ENCODE measurements at regions of chr9 and their contacts with region 1.

Region 1: GRCh38 chr9:83707768-83708514 is at the start of gene UBQLN1:
- DNase-seq: peak; percentile 89
- H3K4me3 ChIP-seq: peak within 1 kb of the TSS; percentile 68 to 90 (median 78)
- H3K27ac ChIP-seq: peak within 1 kb of the TSS; percentile 97
- H3K4me1 ChIP-seq: peaks cover 5% of the 10 kb centered on the region
- H3K27me3 ChIP-seq: no peaks in the 10 kb centered on the region
- CTCF ChIP-seq: no peak
- total RNA-seq, gene UBQLN1: 117 to 126 TPM

Region 2: DNA sequence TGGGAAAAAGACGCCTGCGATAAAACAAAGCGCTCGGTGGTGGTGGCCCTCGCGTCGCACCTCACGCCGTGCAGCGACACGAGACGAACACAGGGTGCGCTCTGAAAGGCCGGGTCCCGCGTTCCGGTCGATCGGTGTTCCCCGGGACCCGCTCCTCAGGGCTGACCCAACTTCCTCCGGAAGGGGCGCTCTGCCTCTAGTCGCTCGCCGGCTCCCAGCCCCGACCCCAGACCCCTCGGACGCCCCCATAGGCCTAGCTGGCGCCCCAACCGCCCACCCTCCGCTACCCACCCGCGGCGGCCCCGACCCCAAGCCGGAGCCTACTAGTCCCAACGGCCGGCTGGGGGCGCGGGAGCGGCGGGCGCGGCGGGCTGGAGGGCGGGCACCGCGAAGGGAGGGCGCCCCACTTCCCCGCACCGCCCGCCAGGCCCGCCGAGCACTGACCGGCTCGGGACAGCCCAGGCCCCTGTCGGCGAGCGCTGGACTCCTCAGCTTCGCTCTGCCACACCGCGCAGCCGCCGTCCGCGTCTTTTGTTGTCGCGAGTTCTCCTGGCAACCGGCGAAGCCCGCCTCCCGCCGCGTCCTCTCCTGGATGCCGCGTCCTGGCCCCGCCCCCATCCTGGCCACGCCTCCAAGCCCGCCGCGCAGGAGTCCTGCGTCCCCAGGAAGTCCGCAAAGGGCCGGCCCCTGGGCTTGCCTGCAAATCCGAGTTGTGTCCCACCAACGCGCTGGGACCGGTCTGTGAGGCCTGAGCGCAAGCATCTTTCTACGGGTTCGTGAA is 213.2 kb after region 1 on chr9 and contains the start of gene KIF27:
- CTCF ChIA-PET with region 1: no interaction called
- dilution Hi-C with region 1: no loop called
- in situ Hi-C with region 1: no loop called
- intact Hi-C with region 1: loop called (anchors 10 kb)
- DNase-seq: peak; percentile 95
- H3K4me3 ChIP-seq: peak within 1 kb of the TSS; percentile 57 to 70 (median 64)
- H3K27ac ChIP-seq: peak within 1 kb of the TSS; percentile 77
- H3K4me1 ChIP-seq: peaks cover 7% of the 10 kb centered on the region
- H3K27me3 ChIP-seq: no peaks in the 10 kb centered on the region
- CTCF ChIP-seq: peak; percentile 10 to 32
- total RNA-seq, gene KIF27: 4.2 to 5.1 TPM